Activated naive CD4-positive, alpha-beta T cell treated with anti-CD3 and anti-CD28 coated beads, Interleukin-2, amount 10 ng/mL, durations not matched to agents 7 days and 5 days (primary cell): ENCODE measurements at regions of chr17 and their contacts with region 1.

Region 1: GRCh38 chr17:73192894-73193701 is at the start of gene COG1:
- DNase-seq: peak; percentile 94
- H3K4me3 Mint-ChIP-seq: peak within 1 kb of the TSS; percentile 98
- H3K27ac Mint-ChIP-seq: peak within 1 kb of the TSS; percentile 98
- H3K4me1 Mint-ChIP-seq: peaks cover 39% of the 10 kb centered on the region
- H3K27me3 Mint-ChIP-seq: no peaks in the 10 kb centered on the region

Region 2: GRCh38 chr17:73231841-73232586 is 38.9 kb after region 1 on chr17:
- CTCF ChIA-PET with region 1: interaction called, 17 read pairs
- DNase-seq: peak; percentile 96
- H3K4me3 Mint-ChIP-seq: peak overlapping the region; percentile 83
- H3K27ac Mint-ChIP-seq: peak overlapping the region; percentile 95
- H3K4me1 Mint-ChIP-seq: peaks cover 63% of the 10 kb centered on the region
- H3K27me3 Mint-ChIP-seq: no peaks in the 10 kb centered on the region